Prostate gland (tissue), 2 donors: ENCODE measurements at regions of chr9 and their contacts with region 1.

Region 1: DNA sequence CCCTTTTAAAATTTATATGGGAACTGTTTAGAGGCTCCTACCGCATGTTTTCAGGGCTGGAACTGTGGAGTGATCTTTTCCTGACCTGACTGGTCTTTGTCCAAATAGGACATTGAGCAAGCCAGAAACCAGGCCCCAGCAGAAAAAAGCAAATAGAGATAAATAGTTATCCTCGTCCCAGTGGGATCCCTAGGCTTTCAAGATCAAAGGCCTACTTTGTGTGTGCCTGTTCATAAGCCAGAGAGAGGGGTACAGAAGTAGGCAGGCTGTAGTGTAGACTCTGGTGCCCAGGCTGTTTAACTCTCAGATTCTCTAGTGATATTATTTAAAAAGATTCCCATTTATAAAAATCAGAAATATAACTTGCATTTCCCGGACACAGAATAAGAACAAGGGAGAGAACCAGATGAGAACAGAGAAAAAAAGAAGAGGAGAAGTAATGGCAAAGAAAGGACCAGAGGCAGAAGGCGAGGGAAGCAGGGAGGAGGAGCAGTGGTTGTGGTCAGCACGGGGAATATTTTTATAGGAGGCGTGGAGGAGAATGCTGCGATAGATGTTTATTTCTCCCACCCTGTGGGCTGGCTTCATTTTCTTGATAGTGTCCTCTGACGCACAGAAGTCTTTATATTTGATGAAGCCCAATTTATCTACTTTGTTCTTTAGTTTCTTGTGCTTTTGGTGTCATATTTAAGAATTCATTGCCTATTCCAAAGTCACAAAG is 101.2 kb downstream of the AOPEP start:
- DNase-seq: peak; percentile 10
- H3K4me3 ChIP-seq: no peak overlapping the region
- H3K27ac ChIP-seq: peak overlapping the region; percentile 66 to 72
- H3K4me1 ChIP-seq: peaks cover 8% of the 10 kb centered on the region
- H3K27me3 ChIP-seq: no peaks in the 10 kb centered on the region
- CTCF ChIP-seq: no peak
- POLR2A ChIP-seq: no peak

Region 2: DNA sequence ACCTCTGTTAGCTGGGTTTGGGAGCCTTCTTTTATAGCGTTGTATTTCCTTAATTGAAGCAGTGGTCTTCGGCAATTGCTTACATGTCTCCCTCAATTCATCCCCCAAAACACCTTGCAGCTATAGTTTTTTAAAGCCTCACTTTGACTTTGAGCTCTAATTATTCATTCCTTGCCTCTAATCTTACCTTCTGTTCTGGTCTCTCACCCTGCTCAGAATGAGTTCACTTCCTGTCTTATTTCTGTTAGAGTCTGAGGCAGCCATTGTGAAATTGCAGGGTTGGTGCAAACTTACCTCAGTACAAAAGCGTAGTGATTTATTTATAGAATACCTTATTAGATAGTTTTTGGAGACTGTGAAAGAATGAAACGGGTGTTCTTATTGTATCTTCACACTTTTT is 66.3 kb before region 1 on chr9:
- intact Hi-C with region 1: no loop called
- DNase-seq: no peak
- H3K4me3 ChIP-seq: no peak overlapping the region
- H3K27ac ChIP-seq: no peak overlapping the region
- H3K4me1 ChIP-seq: no peaks in the 10 kb centered on the region
- H3K27me3 ChIP-seq: no peaks in the 10 kb centered on the region
- CTCF ChIP-seq: no peak
- POLR2A ChIP-seq: no peak

Region 3: DNA sequence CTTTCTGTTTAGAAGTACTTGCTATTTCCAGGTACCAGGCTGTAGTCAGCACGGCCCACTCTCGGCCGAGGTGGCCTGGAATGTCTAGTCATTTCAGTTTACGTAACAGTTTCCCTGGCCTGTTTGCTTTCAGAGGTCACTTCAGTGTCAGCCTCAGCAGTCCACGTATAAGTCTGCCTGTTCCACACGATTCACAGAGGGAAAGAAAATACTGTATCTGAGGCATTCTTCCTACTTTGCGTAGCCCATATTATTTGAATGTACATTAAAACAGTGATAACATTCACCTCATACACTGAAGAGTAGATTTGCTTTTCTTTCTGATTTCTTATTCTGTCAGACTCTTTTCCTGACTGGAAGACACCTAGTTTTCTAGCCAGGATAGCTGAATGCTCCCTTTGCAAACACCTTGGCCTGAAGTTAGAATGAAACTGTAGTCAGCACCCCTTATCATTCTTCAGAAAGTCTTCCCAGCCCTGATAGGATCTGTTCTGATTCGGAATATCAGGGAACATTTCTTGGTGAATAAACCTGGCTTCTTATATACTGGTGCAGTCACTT is 39.6 kb after region 1 on chr9:
- intact Hi-C with region 1: loop called (anchors 5 kb)
- DNase-seq: peak; percentile 67
- H3K4me3 ChIP-seq: no peak overlapping the region
- H3K27ac ChIP-seq: peak overlapping the region; percentile 79 to 83
- H3K4me1 ChIP-seq: no peaks in the 10 kb centered on the region
- H3K27me3 ChIP-seq: no peaks in the 10 kb centered on the region
- CTCF ChIP-seq: no peak
- POLR2A ChIP-seq: peak; percentile 17

Region 4: DNA sequence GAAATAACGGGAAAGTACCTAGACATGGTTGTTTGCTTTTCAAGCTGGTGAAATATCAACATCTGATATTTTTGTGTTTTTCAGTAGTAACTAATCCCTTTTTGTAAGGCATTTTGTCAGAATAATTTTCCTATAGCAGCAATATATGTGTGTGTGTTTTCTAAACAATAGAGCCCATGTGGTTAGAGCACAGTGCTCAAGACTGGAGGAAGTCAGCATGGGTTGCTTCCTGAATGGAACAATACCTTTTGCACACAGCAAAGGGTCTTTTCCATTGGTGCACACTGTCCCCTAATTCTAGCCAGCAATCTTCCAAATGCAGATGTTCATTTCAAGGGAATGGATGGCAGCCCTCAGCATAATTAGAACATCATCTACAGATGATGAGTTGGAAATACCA is 168.9 kb after region 1 on chr9:
- intact Hi-C with region 1: loop called (anchors 5 kb)
- DNase-seq: no peak
- H3K4me3 ChIP-seq: no peak overlapping the region
- H3K27ac ChIP-seq: peak overlapping the region; percentile 75 to 94
- H3K4me1 ChIP-seq: no peaks in the 10 kb centered on the region
- H3K27me3 ChIP-seq: no peaks in the 10 kb centered on the region
- CTCF ChIP-seq: no peak
- POLR2A ChIP-seq: no peak